Right ventricle myocardium inferior (tissue), 1 donor: ENCODE measurements at regions of chr10 and their contacts with region 1.

Region 1: GRCh38 chr10:23314835-23315239 is 29.8 kb downstream of the C10orf67 start:
- DNase-seq: no peak
- ATAC-seq: no peak

Region 2: DNA sequence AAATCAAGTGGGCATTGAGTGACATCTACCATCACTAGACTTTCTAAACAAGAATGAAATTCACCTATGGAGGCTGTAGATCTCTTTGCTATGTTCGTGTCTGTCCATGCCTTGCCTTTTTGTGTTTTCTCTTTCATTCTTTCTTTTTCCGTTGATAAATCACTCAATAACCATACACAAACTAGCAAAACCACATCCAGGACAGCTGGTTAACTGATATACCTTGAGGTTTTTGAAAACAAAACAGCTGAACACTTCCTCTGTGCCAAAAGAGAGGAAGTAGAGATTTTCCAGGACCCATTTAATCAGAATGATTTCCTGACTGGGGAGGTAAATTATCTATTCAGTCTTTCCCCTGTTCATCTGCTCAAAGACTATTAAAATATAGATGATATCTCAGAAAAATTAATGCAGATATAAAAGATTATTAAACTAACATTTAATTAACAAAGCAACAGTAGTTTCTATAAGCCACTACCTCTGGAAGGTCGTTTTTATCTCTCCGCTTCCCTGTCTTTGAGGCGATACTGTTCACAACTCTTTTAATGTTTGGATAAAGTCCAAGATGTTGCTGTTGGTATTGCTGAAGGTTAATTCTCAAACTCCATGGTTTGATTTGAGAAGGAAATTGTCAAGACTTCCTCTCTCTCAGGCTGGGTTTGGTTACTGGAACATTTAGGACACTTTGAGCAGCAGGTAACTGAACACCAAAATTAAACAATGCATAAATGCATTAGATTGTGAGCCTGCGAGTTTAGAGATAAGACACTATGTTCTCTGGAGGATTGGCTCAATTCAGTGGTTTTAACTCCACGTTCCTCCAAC is 54.2 kb after region 1 on chr10:
- intact Hi-C with region 1: no loop called
- DNase-seq: no peak
- ATAC-seq: no peak

Region 3: DNA sequence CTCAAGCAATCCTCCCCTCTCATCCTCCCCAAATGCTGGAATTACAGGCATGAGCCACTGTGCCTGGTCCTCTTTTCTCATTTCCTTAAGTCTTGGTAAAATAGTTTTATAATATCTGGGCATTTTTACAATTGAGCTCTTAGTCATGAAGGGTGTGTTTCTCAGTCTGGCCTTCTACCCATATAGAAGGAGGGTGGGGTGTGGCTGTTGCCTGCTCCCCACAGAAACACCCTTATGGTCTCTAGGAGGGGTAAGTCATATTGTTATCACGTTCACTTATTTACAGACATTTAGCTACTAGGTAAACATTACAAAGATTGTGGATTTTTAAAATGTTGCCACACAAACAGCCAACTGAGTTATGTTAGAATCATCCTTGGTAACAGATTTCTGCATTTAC is 117.3 kb after region 1 on chr10:
- intact Hi-C with region 1: no loop called
- DNase-seq: no peak
- ATAC-seq: no peak

Region 4: GRCh38 chr10:23499372-23500132 is 184.7 kb after region 1 on chr10:
- intact Hi-C with region 1: no loop called
- DNase-seq: no peak
- ATAC-seq: no peak

Region 5: DNA sequence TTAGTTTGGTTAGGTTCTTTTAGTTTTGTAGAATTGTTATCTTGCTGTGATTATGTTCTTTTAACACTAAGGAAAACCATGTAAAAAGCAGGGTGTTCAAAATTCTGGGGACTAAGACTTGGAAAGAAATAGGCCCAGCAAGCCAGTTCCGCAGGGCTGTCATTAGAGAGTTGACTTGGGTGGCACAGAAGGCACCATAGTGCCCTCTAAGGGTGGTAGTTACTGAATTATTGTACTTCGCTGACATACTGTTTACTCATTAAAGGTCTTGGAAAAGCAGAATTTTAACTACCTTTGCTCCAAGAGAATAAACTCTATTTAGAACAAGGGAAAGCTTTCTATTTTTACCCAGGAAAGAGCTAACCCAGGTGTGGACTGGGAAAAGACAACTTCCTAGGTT is 210.6 kb after region 1 on chr10:
- intact Hi-C with region 1: loop called (anchors 2 kb)
- DNase-seq: no peak
- ATAC-seq: peak; percentile 60

Region 6: GRCh38 chr10:23702977-23703414 is 388.2 kb after region 1 on chr10:
- intact Hi-C with region 1: loop called (anchors 5 kb)
- DNase-seq: no peak
- ATAC-seq: peak; percentile 56